Activated CD4-positive, alpha-beta T cell treated with anti-CD3 and anti-CD28 coated beads for 36 hours (primary cell): ENCODE measurements at regions of chr14 and their contacts with region 1.

Region 1: GRCh38 chr14:50109342-50109741 is 7.0 kb downstream of the VCPKMT start:
- DNase-seq: no peak
- ATAC-seq: no peak
- H3K4me3 Mint-ChIP-seq: no peak overlapping the region
- H3K27ac Mint-ChIP-seq: no peak overlapping the region
- H3K4me1 Mint-ChIP-seq: peaks cover 32% of the 10 kb centered on the region
- H3K27me3 Mint-ChIP-seq: no peaks in the 10 kb centered on the region

Region 2: GRCh38 chr14:49862089-49862673 is 247.2 kb before region 1 on chr14:
- CTCF ChIA-PET with region 1: interaction called, 111 read pairs
- POLR2A ChIA-PET with region 1: interaction called, 4 read pairs
- intact Hi-C with region 1: loop called (anchors 1 kb)
- DNase-seq: peak; percentile 92
- ATAC-seq: peak; percentile 13
- H3K4me3 Mint-ChIP-seq: no peak overlapping the region
- H3K27ac Mint-ChIP-seq: no peak overlapping the region
- H3K4me1 Mint-ChIP-seq: peaks cover 20% of the 10 kb centered on the region
- H3K27me3 Mint-ChIP-seq: no peaks in the 10 kb centered on the region

Region 3: GRCh38 chr14:49867831-49868723 is 241.3 kb before region 1 on chr14:
- CTCF ChIA-PET with region 1: interaction called, 111 read pairs
- POLR2A ChIA-PET with region 1: interaction called, 8 read pairs
- intact Hi-C with region 1: loop called (anchors 1 kb)
- DNase-seq: peak; percentile 100
- ATAC-seq: peak; percentile 87
- H3K4me3 Mint-ChIP-seq: peak overlapping the region; percentile 98
- H3K27ac Mint-ChIP-seq: peak overlapping the region; percentile 96
- H3K4me1 Mint-ChIP-seq: peaks cover 22% of the 10 kb centered on the region
- H3K27me3 Mint-ChIP-seq: no peaks in the 10 kb centered on the region

Region 4: GRCh38 chr14:50095895-50096294 is 13.4 kb before region 1 on chr14:
- CTCF ChIA-PET with region 1: interaction called, 12 read pairs
- POLR2A ChIA-PET with region 1: no interaction called
- intact Hi-C with region 1: loop called in 1 of 2 experiments (anchors 2 kb)
- DNase-seq: no peak
- ATAC-seq: peak; percentile 66
- H3K4me3 Mint-ChIP-seq: peak overlapping the region; percentile 45
- H3K27ac Mint-ChIP-seq: peak overlapping the region; percentile 80
- H3K4me1 Mint-ChIP-seq: peaks cover 73% of the 10 kb centered on the region
- H3K27me3 Mint-ChIP-seq: no peaks in the 10 kb centered on the region